ENCODE measurements at regions of chr9 and their contacts with region 1.

Region 1: GRCh38 chr9:94783102-94783664 is 56.7 kb downstream of the AOPEP start:
- DNase-seq: peak; percentile 99
- H3K4me3 ChIP-seq: no peak overlapping the region
- H3K27ac ChIP-seq: peak overlapping the region; percentile 1
- H3K4me1 ChIP-seq: peaks cover 8% of the 10 kb centered on the region
- H3K27me3 ChIP-seq: no peaks in the 10 kb centered on the region
- CTCF ChIP-seq: peak; percentile 73 to 80

Region 2: GRCh38 chr9:94554439-94555391 is 228.5 kb before region 1 on chr9 and contains the start of gene PCAT7:
- CTCF ChIA-PET with region 1: no interaction called
- dilution Hi-C with region 1: no loop called
- in situ Hi-C with region 1: no loop called
- intact Hi-C with region 1: loop called (anchors 1 kb)
- DNase-seq: no peak
- H3K4me3 ChIP-seq: no peak within 1 kb of the TSS
- H3K27ac ChIP-seq: no peak within 1 kb of the TSS
- H3K4me1 ChIP-seq: no peaks in the 10 kb centered on the region
- H3K27me3 ChIP-seq: no peaks in the 10 kb centered on the region
- CTCF ChIP-seq: peak; percentile 19 to 52
- total RNA-seq, gene PCAT7: 0.17 TPM in 1 of 2 donors, not detected in the other

Region 3: DNA sequence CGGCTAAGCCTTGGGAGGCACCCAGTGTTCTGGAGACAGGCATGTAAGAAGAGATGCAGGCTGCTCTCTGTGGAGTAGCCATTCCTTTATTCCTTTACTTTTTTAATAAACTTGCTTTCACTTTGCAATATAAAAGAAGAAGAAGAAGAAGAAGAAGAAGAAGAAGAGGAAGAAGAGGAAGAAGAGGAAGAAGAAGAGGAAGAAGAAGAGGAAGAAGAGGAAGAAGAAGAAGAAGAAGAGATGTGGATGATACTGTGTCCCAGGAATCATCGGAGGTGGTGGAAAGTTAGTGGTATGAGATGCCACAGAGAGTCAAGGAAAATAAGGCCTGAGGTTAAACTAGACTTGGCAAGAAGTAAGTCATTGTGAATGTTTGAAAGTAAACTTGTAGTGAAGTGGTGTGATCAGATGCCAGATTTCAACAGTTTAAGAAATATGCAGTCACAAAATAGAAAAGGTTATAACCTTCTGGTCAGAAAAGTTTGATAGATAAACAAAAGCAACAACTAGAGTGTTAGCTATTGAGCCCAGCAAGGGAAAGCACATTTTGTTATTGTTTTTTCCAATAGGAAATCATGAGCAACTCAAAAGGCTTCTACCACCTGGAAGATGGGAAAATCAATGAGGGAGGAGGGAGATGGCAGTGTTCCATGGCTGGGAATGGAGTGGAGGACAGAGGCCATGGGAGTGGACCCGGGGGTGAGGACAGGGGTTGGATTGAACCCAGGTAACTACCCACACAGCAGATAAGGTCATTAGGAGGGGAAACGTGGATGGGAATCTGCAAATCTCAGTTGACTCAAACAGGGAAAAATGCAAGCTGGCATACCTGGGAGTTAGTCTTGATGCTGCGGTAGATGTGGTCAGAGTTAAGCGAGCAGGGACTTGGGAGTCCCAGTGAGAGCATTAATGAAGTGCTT is 39.9 kb before region 1 on chr9:
- CTCF ChIA-PET with region 1: no interaction called
- dilution Hi-C with region 1: no loop called
- in situ Hi-C with region 1: no loop called
- intact Hi-C with region 1: no loop called
- DNase-seq: peak; percentile 88
- H3K4me3 ChIP-seq: no peak overlapping the region
- H3K27ac ChIP-seq: peak overlapping the region; percentile 30
- H3K4me1 ChIP-seq: peaks cover 13% of the 10 kb centered on the region
- H3K27me3 ChIP-seq: no peaks in the 10 kb centered on the region
- CTCF ChIP-seq: no peak

Region 4: DNA sequence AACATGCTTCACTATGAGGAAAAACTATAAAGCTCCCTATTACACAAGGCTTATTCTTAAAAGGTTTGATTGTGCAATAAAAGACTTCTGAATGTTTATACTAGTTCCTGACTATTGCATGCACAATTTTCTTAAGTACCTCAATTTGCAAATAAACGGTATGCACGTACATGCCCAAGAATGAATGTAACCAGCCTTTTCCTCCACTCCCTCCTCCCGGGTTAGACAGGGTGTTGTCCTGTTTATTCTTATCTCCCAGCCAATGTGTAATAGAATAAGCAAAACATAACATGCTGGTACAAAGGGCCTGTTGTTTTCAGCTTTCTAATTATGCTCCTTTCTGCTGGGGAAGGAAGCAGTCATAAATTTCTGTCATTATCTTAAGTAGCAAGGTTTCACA is 22.4 kb after region 1 on chr9:
- CTCF ChIA-PET with region 1: no interaction called
- dilution Hi-C with region 1: no loop called
- in situ Hi-C with region 1: no loop called
- intact Hi-C with region 1: loop called (anchors 1 kb)
- DNase-seq: peak; percentile 99
- H3K4me3 ChIP-seq: no peak overlapping the region
- H3K27ac ChIP-seq: peak overlapping the region; percentile 96
- H3K4me1 ChIP-seq: peaks cover 48% of the 10 kb centered on the region
- H3K27me3 ChIP-seq: no peaks in the 10 kb centered on the region
- CTCF ChIP-seq: no peak

Region 5: DNA sequence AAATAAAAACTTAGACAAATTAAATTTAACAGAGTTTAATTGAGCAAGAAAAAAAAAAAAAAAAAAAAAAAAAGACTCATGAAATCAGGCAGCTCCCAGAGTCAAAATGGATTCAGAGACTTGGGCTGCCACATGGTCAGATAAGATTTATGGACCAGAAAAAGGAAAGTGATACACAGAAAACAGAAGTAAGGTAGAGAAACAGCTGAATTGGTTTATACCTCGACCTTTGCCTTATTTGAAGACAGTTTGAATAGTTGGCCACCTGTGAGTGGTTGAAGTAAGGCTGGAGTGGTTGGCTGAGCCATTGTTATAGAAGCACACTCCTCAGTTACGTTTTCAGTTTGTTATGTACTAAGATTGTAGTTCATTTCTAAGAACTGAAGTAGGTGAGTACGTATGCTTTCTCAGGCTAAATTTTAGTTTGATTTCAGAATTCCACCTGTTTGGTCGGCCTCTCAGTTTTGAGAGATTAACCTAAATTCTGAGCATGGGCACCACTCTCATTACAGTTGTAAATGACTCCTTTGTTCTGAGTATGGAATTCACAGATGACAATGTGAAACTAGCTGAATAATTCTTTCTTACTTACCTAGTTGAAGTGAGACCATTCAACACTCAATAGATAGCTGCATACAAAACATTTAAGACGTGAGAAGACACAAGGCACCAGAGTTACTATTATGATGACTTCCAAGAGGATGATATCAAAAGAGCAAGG is 92.3 kb after region 1 on chr9:
- CTCF ChIA-PET with region 1: no interaction called
- dilution Hi-C with region 1: no loop called
- in situ Hi-C with region 1: loop called in 1 of 2 experiments (anchors 25 kb)
- intact Hi-C with region 1: no loop called
- DNase-seq: no peak
- H3K4me3 ChIP-seq: no peak overlapping the region
- H3K27ac ChIP-seq: no peak overlapping the region
- H3K4me1 ChIP-seq: peaks cover 35% of the 10 kb centered on the region
- H3K27me3 ChIP-seq: no peaks in the 10 kb centered on the region
- CTCF ChIP-seq: no peak

Region 6: GRCh38 chr9:94929894-94930293 is 146.7 kb after region 1 on chr9:
- CTCF ChIA-PET with region 1: no interaction called
- dilution Hi-C with region 1: no loop called
- in situ Hi-C with region 1: no loop called
- intact Hi-C with region 1: no loop called
- DNase-seq: no peak
- H3K4me3 ChIP-seq: no peak overlapping the region
- H3K27ac ChIP-seq: no peak overlapping the region
- H3K4me1 ChIP-seq: peaks cover 32% of the 10 kb centered on the region
- H3K27me3 ChIP-seq: no peaks in the 10 kb centered on the region
- CTCF ChIP-seq: no peak

Region 7: DNA sequence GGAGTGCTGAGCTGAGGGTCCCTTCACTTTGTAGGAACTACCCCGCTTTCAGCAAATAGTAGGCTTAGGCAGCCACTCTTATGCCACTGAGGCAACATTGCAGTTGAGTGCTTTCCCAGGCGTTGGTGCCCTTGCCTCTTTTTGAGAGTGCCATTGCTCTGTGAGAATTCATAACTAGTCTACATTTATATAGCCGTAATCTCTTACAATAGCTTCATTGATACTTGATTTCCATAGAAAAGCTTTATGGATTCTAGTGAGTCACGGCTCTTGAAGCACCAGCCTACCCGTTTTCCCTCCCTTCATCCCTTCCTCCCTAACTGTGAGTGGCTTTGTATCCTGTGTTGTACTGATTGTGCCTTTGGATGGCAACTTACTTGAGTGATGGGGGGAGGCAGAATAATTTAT is 227.3 kb after region 1 on chr9:
- CTCF ChIA-PET with region 1: no interaction called
- dilution Hi-C with region 1: no loop called
- in situ Hi-C with region 1: loop called in 1 of 2 experiments (anchors 5 kb)
- intact Hi-C with region 1: loop called (anchors 1 kb)
- DNase-seq: peak; percentile 71
- H3K4me3 ChIP-seq: no peak overlapping the region
- H3K27ac ChIP-seq: peak overlapping the region; percentile 43
- H3K4me1 ChIP-seq: peaks cover 37% of the 10 kb centered on the region
- H3K27me3 ChIP-seq: no peaks in the 10 kb centered on the region
- CTCF ChIP-seq: no peak

Region 8: GRCh38 chr9:95092262-95093072 is 309.3 kb after region 1 on chr9:
- CTCF ChIA-PET with region 1: no interaction called
- dilution Hi-C with region 1: loop called (anchors 5 kb)
- in situ Hi-C with region 1: no loop called
- intact Hi-C with region 1: no loop called
- DNase-seq: peak; percentile 98
- H3K4me3 ChIP-seq: no peak overlapping the region
- H3K27ac ChIP-seq: peak overlapping the region; percentile 54
- H3K4me1 ChIP-seq: peaks cover 29% of the 10 kb centered on the region
- H3K27me3 ChIP-seq: no peaks in the 10 kb centered on the region
- CTCF ChIP-seq: no peak

Region 9: DNA sequence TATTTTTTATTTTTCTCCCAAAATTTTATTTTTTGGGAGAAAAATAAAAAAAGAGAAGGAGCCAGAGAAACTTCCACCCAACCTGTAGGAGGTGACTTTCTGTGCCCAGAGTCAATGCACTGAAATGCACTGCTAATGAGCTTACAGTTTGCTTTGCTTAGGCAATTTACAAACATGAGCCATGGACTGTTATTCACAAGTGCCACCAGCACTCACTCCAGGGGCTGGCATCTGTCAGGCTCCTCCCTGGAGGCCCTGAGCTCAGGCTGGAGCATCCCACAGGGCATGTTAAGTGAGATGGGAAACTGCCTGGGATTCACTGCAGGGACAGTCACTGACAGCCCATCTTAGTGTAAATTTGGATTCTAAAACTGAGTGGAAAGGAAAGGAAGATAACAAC is 459.4 kb after region 1 on chr9:
- CTCF ChIA-PET with region 1: no interaction called
- dilution Hi-C with region 1: no loop called
- in situ Hi-C with region 1: no loop called
- intact Hi-C with region 1: no loop called
- DNase-seq: no peak
- H3K4me3 ChIP-seq: no peak overlapping the region
- H3K27ac ChIP-seq: no peak overlapping the region
- H3K4me1 ChIP-seq: peaks cover 5% of the 10 kb centered on the region
- H3K27me3 ChIP-seq: no peaks in the 10 kb centered on the region
- CTCF ChIP-seq: no peak

Measured in mammary epithelial cell (primary cell).